ENCODE measurements at regions of chr5 and their contacts with region 1.

Region 1: DNA sequence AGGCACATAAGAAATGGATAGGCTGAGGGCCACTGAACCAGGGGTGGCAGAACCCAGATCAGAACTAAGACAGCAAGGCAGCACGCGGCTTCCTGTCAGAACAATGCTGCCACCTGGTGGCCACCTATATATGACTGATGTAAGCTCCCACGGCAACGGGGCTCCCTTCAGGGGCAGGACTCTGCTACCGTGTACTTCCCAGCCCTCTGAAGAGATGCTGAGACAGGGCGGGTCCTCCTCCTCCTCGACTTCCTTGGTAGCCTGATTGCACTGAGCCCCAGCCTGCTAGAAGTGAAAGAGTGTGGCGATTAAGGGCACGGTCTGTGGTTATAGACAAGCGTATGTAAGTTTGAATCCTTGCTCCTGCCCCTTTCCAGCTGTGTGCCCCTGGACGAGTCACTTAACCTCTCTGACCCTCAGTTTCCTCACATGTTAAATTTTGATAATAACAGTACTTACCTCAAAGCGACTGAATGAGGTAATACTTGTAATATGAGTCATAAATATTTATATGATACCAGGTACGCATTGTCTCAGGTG is 13.3 kb downstream of the RPS14 start:
- DNase-seq: peak; percentile 69
- H3K4me3 ChIP-seq: no peak overlapping the region
- H3K27ac ChIP-seq: no peak overlapping the region
- H3K4me1 ChIP-seq: no peaks in the 10 kb centered on the region
- H3K27me3 ChIP-seq: no peaks in the 10 kb centered on the region
- CTCF ChIP-seq: peak; percentile 80 to 83
- POLR2A ChIP-seq: no peak

Region 2: GRCh38 chr5:150161242-150162141 is 274.7 kb before region 1 on chr5:
- CTCF ChIA-PET with region 1: interaction called, 3 read pairs
- POLR2A ChIA-PET with region 1: no interaction called
- dilution Hi-C with region 1: no loop called
- intact Hi-C with region 1: loop called (anchors 1 kb)
- DNase-seq: peak; percentile 59
- H3K4me3 ChIP-seq: no peak overlapping the region
- H3K27ac ChIP-seq: no peak overlapping the region
- H3K4me1 ChIP-seq: no peaks in the 10 kb centered on the region
- H3K27me3 ChIP-seq: peaks cover 6 to 7% of the 10 kb centered on the region in 2 experiments
- CTCF ChIP-seq: peak; percentile 94 to 97
- POLR2A ChIP-seq: no peak

Region 3: GRCh38 chr5:150350524-150351344 is 85.5 kb before region 1 on chr5:
- CTCF ChIA-PET with region 1: interaction called, 10 read pairs
- POLR2A ChIA-PET with region 1: no interaction called
- dilution Hi-C with region 1: no loop called
- intact Hi-C with region 1: loop called (anchors 1 kb)
- DNase-seq: peak; percentile 49
- H3K4me3 ChIP-seq: no peak overlapping the region
- H3K27ac ChIP-seq: no peak overlapping the region
- H3K4me1 ChIP-seq: no peaks in the 10 kb centered on the region
- H3K27me3 ChIP-seq: no peaks in the 10 kb centered on the region
- CTCF ChIP-seq: peak; percentile 51 to 56
- POLR2A ChIP-seq: no peak

Region 4: DNA sequence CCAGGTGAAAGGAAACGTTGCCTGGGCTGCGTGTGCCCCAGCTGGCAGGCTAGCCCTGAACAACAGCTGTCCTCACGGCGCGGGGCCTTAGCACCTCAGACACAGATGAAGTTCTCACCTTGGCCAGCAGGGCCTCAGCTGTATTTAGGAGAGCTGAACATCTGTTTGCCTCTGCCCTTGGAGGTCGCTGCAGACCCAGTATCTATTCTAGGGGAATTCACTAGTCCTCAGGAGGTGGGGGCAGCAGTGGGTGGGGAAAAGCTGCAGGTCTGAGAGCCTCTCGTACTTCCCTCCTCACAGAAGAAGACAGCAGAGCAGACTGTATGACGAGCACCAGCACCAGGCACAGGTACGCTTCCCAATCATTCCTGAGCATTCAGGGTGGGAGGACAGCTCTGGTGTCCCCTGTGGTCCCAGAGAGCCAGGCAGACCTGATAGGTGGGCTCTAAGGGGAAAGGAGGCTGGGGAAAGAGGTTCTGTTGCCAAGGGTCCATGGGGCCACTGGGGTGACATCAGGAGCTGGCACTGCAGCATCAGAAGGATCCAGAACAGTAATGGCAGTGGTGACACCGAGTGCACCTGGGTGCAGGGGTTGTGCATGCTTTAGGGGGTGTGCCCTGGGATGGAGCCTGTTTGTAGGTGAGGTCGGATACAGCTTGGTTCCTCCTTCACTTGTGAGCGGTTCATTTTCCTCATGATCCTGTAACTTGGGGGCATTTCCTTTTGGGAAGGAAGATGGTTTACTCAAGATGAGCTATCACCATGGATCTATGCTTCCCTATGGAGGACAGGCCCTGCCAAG is 37.3 kb before region 1 on chr5:
- CTCF ChIA-PET with region 1: interaction called, 70 read pairs
- POLR2A ChIA-PET with region 1: no interaction called
- dilution Hi-C with region 1: no loop called
- intact Hi-C with region 1: loop called (anchors 1 kb)
- DNase-seq: no peak
- H3K4me3 ChIP-seq: no peak overlapping the region
- H3K27ac ChIP-seq: no peak overlapping the region
- H3K4me1 ChIP-seq: no peaks in the 10 kb centered on the region
- H3K27me3 ChIP-seq: no peaks in the 10 kb centered on the region
- CTCF ChIP-seq: peak; percentile 9 to 13
- POLR2A ChIP-seq: no peak

Measured in endothelial cell of umbilical vein (primary cell).